Posterior vena cava (tissue), 2 donors: ENCODE measurements at regions of chr3 and their contacts with region 1.

Region 1: DNA sequence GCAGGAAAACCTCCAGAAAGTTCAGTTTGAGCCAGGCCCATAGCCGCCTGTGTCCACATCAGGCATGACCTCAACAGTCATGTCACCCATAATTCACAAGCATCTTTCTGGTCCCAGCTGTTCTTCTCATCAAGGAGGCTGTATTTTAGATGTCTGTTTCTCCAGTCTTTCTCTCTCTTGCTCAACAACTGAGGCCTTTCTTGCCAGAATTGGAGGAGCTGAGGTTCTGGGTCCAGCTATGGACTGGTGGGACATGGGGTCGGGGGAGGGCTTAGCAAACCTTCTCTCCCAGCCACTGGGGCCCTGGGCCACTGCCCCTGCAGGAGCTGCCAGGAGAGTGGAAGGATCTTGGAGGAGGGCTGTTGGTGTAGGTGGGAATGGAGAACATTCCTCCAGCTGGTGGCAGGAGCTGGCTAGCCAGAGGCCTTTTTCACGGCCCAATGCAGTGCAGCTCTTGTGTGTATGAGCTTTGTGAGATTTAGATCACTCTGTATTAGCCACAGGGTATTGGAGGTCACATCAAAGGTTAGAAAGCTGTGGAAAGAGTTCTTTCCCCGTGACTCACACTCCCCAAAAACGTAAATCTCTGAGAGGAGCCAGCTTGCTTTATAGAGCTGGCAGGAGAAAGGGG is 23.5 kb downstream of the MAGEF1 start:
- DNase-seq: peak; percentile 77

Region 2: DNA sequence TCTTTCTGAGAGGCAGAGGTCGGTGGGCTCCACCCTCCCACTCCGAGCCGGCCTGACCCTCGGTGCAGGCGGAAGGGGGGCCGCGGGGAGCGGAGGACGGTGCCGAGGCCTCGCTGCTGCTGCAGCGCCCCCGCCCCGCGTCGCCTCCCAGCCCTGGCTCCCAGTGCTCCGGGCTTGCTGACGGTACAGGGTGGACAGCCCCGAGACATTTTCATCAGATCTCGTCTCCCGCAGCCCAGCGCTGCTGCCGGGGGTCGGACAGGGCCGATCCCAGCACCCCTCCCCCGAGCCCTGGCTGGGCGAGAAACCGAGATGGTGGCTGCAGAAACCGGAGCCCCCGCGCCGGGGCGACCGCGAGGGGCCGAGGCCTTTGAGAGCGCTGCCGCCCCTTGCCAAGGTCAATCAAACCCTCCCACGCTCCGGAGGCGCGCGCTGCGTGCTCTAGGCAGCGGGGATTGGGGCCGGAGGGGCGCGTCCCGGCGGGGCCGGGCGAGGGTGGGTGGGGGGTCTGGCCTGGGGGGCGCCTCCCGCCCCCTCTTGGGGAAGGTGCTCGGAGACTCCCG is 84.2 kb before region 1 on chr3:
- intact Hi-C with region 1: loop called in 1 of 2 experiments (anchors 10 kb)
- DNase-seq: peak; percentile 83